Activated T-helper 1 cell treated with anti-CD3 and anti-CD28 coated beads, Interleukin-12 subunit alpha, Interleukin-12 subunit beta, Interleukin-2, Interleukin-4 antibody, amounts not matched to agents 30 ng/mL and 10 ng/mL and 1 ng/mL, durations not matched to agents 14 hours and 24 hours and 36 hours (primary cell): ENCODE measurements at regions of chr9 and their contacts with region 1.

Region 1: GRCh38 chr9:74444369-74444768 is 52.8 kb upstream of the RORB start:
- DNase-seq: no peak
- H3K4me3 Mint-ChIP-seq: no peak overlapping the region
- H3K27ac Mint-ChIP-seq: no peak overlapping the region
- H3K4me1 Mint-ChIP-seq: no peaks in the 10 kb centered on the region
- H3K27me3 Mint-ChIP-seq: no peaks in the 10 kb centered on the region

Region 2: DNA sequence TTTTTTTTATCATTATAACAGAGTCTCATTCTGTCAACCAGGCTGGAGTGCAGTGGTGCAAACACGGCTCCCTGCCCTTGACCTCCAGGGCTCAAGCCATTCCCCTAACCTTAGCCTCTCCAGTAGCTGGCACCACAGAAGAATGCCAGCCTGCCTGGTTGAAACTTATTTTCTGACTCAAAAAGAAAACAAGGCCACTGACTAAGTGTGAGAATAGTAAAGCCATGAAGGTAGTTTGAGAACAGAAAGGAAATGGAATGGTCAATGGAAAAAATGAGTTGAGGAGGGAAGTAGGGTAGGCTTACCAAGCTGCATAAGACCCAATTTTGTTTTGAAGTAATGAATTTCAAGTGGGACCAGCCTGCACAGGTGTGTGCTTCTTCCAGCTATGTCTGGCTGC is 30.0 kb before region 1 on chr9:
- intact Hi-C with region 1: loop called (anchors 1 kb)
- DNase-seq: no peak
- H3K4me3 Mint-ChIP-seq: no peak overlapping the region
- H3K27ac Mint-ChIP-seq: no peak overlapping the region
- H3K4me1 Mint-ChIP-seq: no peaks in the 10 kb centered on the region
- H3K27me3 Mint-ChIP-seq: no peaks in the 10 kb centered on the region

Region 3: DNA sequence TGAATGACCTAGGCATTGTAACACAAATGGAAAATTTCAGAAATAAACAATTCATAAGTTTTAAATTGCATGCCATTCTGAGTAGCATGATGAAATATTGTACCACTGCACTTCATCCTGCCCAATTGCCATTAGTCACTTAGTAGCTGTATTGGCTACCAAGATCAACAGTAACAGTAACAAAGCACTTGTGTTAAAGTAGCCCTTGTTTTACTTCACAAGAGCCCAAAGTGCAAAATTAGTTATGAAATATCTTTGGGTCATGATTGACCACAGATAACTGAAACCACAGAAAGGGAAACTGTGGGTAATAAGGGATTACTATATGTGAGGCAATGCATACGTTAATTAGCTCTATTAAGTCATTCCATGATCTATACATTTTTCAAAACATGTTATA is 19.5 kb after region 1 on chr9:
- intact Hi-C with region 1: no loop called
- DNase-seq: no peak
- H3K4me3 Mint-ChIP-seq: no peak overlapping the region
- H3K27ac Mint-ChIP-seq: no peak overlapping the region
- H3K4me1 Mint-ChIP-seq: no peaks in the 10 kb centered on the region
- H3K27me3 Mint-ChIP-seq: no peaks in the 10 kb centered on the region

Region 4: GRCh38 chr9:76321205-76321828 is 1876.9 kb after region 1 on chr9:
- intact Hi-C with region 1: no loop called
- DNase-seq: no peak
- H3K4me3 Mint-ChIP-seq: no peak overlapping the region
- H3K27ac Mint-ChIP-seq: no peak overlapping the region
- H3K4me1 Mint-ChIP-seq: no peaks in the 10 kb centered on the region
- H3K27me3 Mint-ChIP-seq: no peaks in the 10 kb centered on the region